Heart right ventricle (tissue), 16 donors: ENCODE measurements at regions of chrX and their contacts with region 1.

Region 1: DNA sequence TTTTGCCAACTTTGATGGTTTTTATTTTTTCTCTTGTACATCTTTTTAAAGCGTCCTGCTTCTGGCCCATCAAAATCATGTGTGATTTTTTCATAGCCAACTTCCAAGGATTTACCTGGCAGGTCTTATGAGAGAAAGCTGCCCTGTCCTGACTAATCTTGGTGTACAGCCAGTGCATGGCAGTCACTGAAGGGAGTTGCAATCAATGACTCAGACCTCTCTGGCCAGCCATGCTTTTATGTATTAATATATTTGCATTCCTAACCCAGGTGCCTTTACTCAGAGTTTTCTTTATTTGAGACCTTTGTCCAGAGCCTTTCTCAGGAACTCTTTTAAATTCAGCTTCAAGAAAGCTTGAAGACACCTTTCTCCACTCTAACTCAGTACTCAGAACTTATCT is 691.5 kb upstream of the HTR2C start:
- DNase-seq: no peak
- ATAC-seq: no peak
- H3K4me3 ChIP-seq: no peak overlapping the region
- H3K27ac ChIP-seq: no peak overlapping the region
- H3K4me1 ChIP-seq: no peaks in the 10 kb centered on the region
- H3K27me3 ChIP-seq: peaks cover 0 to 9% (median 0%) of the 10 kb centered on the region in 7 donors
- CTCF ChIP-seq: no peak

Region 2: GRCh38 chrX:113412106-113412505 is 480.3 kb before region 1 on chrX:
- intact Hi-C with region 1: loop called in 1 of 10 experiments (anchors 10 kb)
- DNase-seq: no peak
- ATAC-seq: no peak
- H3K4me3 ChIP-seq: no peak overlapping the region
- H3K27ac ChIP-seq: no peak overlapping the region
- H3K4me1 ChIP-seq: no peaks in the 10 kb centered on the region
- H3K27me3 ChIP-seq: peaks cover 0 to 4% (median 0%) of the 10 kb centered on the region in 7 donors
- CTCF ChIP-seq: no peak